Breast epithelium (tissue), 4 donors: ENCODE measurements at regions of chr17 and their contacts with region 1.

Region 1: DNA sequence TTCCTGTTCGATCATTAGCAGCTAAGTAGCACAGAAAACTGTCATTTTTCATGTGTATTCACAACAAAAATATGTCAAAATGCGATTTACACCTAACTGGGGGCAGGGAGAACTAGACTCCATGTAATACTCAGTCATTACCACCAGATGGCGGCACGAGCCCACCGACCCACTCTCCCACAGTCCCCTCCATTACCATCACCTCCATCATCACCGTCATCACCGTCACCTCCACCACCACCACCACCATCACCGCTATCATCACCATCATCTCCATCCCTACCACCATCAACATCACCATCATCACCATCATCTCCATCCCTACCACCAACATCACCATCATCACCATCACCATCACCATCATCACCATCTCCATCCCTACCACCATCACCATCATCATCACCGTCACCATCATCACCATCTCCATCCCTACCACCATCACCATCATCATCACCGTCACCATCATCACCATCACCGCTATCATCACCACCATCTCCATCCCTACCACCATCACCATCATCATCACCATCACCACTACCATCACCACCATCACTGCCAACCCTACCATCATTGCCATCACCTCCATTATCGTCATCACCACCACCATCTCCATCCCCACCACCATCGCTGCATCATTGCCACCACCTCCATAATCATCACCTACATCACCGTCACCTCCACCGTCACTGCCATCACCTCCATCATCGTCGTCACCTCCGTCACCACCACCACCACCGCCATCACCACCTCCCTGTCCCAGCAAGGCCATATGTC is 14.4 kb downstream of the NDUFAF8 start:
- DNase-seq: no peak
- H3K4me3 ChIP-seq: no peak overlapping the region
- H3K27ac ChIP-seq: no peak overlapping the region
- H3K4me1 ChIP-seq: no peaks in the 10 kb centered on the region
- H3K27me3 ChIP-seq: no peaks in the 10 kb centered on the region
- CTCF ChIP-seq: peak; percentile 94 to 98 (median 95)
- POLR2A ChIP-seq: no peak

Region 2: DNA sequence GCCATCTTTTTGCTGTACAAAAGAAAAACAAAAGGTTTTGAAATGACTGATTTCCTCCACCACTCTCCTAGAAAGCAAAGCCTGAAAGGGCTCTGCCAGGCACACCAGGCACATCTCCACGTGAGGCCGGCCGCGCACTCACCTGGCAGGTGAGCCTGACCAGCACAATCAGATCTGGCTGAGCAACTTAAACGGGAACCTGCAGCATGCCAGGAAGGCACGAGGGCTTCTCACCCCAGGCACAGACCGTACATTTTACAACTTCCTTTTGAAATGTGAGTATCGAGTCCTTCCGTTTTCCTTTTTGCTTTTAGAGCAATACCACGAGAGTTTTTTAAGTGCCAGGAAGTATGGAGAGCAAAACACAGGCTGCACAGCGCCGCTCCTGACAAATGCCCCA is 19.1 kb after region 1 on chr17:
- intact Hi-C with region 1: no loop called
- DNase-seq: peak in 1 of 2 donors; percentile 46
- H3K4me3 ChIP-seq: no peak overlapping the region
- H3K27ac ChIP-seq: no peak overlapping the region
- H3K4me1 ChIP-seq: no peaks in the 10 kb centered on the region
- H3K27me3 ChIP-seq: no peaks in the 10 kb centered on the region
- CTCF ChIP-seq: no peak
- POLR2A ChIP-seq: no peak

Region 3: GRCh38 chr17:81309070-81309905 is 55.7 kb after region 1 on chr17:
- intact Hi-C with region 1: no loop called
- DNase-seq: peak; percentile 85 to 92
- H3K4me3 ChIP-seq: peak overlapping the region; percentile 37 to 62 (median 38)
- H3K27ac ChIP-seq: peak overlapping the region; percentile 68 to 88
- H3K4me1 ChIP-seq: peaks cover 11 to 12% of the 10 kb centered on the region in 2 donors
- H3K27me3 ChIP-seq: no peaks in the 10 kb centered on the region
- CTCF ChIP-seq: peak; percentile 70 to 74 (median 72)
- POLR2A ChIP-seq: peak; percentile 31

Region 4: DNA sequence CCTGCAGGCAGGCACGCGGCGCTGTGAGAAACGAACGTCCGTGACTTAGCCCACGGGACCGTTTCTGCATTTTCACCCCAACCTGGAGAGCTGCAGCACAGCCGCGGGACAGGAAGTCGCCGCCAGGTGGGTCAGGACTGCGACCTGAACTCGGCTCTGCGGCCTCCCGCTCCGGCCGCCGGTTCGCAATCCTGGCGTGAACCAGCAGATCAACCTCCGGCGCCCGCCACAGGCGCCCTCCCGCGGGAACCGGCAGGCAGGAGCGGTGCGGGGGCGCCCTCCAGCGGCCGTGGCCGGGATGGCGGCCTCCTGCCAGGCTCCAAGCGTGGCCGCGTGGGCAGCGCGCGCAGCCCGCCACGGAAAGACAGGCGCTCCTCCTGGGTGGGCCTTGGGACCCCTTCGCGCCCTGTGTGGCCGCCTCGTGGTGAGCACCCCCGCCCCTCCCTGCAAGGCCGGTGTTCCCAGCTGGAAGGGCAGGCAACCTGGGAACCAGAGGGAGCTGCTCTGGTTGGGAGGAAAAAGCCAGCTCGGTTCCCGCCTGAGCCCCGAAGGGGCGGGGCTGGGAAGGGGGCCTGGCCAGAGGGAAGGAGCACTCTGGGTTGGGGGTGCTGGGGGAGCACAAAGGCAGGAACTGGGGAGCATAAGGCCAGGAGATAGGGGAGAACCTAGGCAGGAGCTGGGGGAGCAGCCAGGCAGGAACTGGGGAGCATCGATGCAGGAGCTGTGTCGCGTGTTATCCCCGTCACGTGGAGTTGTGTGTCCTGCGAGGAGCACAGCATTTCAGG is 230.8 kb after region 1 on chr17:
- intact Hi-C with region 1: loop called (anchors 10 kb)
- DNase-seq: peak; percentile 78 to 90
- H3K4me3 ChIP-seq: peak overlapping the region; percentile 34 to 68 (median 46)
- H3K27ac ChIP-seq: no peak overlapping the region
- H3K4me1 ChIP-seq: peaks cover 0 to 4% of the 10 kb centered on the region in 2 donors
- H3K27me3 ChIP-seq: no peaks in the 10 kb centered on the region
- CTCF ChIP-seq: peak; percentile 80 to 99 (median 82)
- POLR2A ChIP-seq: no peak

Region 5: GRCh38 chr17:81846743-81847689 is 593.5 kb after region 1 on chr17:
- intact Hi-C with region 1: loop called (anchors 2 kb)
- DNase-seq: no peak
- H3K4me3 ChIP-seq: no peak overlapping the region
- H3K27ac ChIP-seq: no peak overlapping the region
- H3K4me1 ChIP-seq: no peaks in the 10 kb centered on the region
- H3K27me3 ChIP-seq: no peaks in the 10 kb centered on the region
- CTCF ChIP-seq: no peak
- POLR2A ChIP-seq: no peak

Region 6: GRCh38 chr17:82315703-82316358 is 1062.3 kb after region 1 on chr17:
- intact Hi-C with region 1: no loop called
- DNase-seq: no peak
- H3K4me3 ChIP-seq: peak overlapping the region in 2 of 3 donors; percentile 2 to 47
- H3K27ac ChIP-seq: no peak overlapping the region
- H3K4me1 ChIP-seq: no peaks in the 10 kb centered on the region
- H3K27me3 ChIP-seq: peaks cover 14 to 34% of the 10 kb centered on the region in 2 donors
- CTCF ChIP-seq: no peak
- POLR2A ChIP-seq: no peak